Left cardiac atrium (tissue), 4 donors: ENCODE measurements at regions of chr3 and their contacts with region 1.

Region 1: GRCh38 chr3:73086071-73086494 is 24.6 kb downstream of the EBLN2 start:
- DNase-seq: peak; percentile 50
- ATAC-seq: peak; percentile 63 to 72

Region 2: DNA sequence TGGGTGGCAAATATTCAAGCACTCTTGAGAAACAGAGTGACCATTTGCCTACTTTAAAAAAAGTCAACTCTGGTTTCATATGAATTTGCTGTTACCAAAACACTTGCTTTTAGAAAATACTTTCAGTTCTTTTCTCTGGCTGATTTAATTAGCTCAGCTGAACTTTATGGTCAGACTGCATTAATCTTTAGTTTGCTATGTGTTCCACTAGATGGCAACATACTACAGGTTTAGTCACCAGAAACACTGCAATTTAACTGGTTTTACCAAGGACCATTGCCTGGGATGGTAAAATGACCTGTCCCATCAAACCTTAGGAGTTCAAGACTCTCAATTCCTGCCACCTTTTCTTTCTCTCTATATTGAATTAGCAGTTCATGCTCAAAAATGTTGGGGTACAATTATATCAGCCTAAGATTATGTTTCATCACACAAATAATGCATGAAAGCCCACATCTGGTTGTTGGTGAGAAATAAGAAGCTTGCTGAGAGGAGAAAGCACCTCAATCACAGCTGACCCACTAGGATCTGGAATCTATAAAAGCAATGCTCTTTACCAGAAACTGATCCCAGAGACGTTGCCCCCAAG is 1375.1 kb before region 1 on chr3:
- intact Hi-C with region 1: loop called in 1 of 2 experiments (anchors 10 kb)
- DNase-seq: no peak
- ATAC-seq: peak in 1 of 2 donors; percentile 68

Region 3: GRCh38 chr3:71875461-71875947 is 1210.6 kb before region 1 on chr3:
- intact Hi-C with region 1: loop called in 1 of 2 experiments (anchors 10 kb)
- DNase-seq: peak; percentile 76
- ATAC-seq: peak; percentile 95

Region 4: GRCh38 chr3:72855001-72855400 is 231.1 kb before region 1 on chr3:
- intact Hi-C with region 1: loop called (anchors 5 to 10 kb)
- DNase-seq: no peak
- ATAC-seq: no peak

Region 5: DNA sequence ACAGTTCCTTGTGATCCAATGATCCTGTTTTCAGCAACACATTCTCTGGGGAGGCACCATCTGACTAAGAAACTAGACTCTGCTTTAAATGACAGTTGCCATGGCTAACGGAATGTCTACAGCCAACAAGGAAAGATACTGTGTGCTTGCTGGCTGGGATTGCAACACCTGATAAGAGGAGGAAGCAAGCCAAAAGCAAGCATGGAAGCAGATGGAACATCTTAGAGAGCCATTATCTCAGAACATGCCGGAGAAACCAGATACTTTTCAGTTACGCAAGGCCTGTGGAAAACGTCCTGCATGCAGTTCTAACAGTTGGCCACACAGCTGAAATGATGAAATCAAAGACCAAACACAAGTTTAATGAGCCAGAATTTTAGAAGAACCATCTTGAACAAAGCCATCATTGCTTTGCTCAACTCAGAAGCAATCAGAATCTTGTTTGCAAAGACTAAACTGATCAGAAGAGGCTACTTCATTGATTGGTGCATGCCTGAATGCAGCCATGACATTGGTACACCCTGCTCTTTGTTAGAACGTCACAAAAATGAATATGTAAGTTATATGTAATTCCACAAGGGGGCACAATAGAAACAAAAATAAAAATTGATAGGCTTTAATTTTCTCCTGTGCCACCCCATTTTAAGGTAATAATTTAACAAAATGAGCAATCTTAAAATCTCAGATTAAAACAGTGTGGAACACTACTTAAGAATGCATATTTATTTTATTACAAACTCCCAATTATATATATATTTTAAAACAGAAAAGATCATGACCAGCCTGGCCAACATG is 147.4 kb before region 1 on chr3:
- intact Hi-C with region 1: loop called in 1 of 2 experiments (anchors 10 kb)
- DNase-seq: peak; percentile 60
- ATAC-seq: peak; percentile 92 to 96

Region 6: GRCh38 chr3:72960812-72961518 is 125.1 kb before region 1 on chr3:
- intact Hi-C with region 1: no loop called
- DNase-seq: peak; percentile 60
- ATAC-seq: peak; percentile 84 to 89